ENCODE measurements at regions of chr6 and their contacts with region 1.

Region 1: GRCh38 chr6:2103644-2104523 is 141.5 kb downstream of the GMDS start:
- DNase-seq: peak in 3 of 14 experiments; percentile 44 to 50 (median 45)
- ATAC-seq: peak; percentile 58
- H3K4me3 ChIP-seq: no peak overlapping the region
- H3K4me3 Mint-ChIP-seq: no peak overlapping the region
- H3K27ac ChIP-seq: no peak overlapping the region
- H3K27ac Mint-ChIP-seq: no peak overlapping the region
- H3K4me1 ChIP-seq: no peaks in the 10 kb centered on the region
- H3K4me1 Mint-ChIP-seq: no peaks in the 10 kb centered on the region
- H3K27me3 ChIP-seq: no peaks in the 10 kb centered on the region
- H3K27me3 Mint-ChIP-seq: no peaks in the 10 kb centered on the region
- CTCF ChIP-seq: peak; percentile 63

Region 2: DNA sequence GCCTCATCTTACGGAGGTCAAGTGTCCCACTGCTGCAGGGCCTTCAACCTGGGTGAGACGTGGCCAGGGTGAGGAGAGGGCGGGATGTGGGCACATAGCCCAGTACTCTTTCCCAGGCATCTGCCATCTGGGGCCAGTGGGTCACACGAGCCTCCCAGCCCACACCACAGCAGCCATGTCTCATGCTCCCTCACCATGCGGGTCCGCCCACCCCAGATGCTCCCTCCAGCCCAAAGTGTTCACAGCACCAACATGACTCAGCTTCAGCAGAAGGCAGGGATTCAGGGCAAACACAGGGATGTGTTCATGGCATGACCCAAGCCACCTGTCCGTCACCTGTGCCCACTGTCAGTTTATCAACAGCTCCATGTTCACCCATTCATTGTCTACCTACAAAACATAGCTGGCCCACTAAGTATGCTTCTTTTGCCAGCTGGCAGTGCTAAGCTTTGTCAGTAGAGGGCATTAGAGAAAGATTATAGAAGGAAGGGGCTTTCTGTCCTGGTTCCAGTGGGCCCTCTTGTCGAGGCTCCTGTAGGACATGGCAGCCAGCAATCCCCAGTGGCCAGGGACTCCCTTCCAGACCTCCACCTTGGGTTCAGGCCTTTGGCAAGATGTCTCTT is 605.3 kb before region 1 on chr6:
- CTCF ChIA-PET with region 1: no interaction called
- POLR2A ChIA-PET with region 1: no interaction called
- intact Hi-C with region 1: no loop called
- DNase-seq: no peak
- ATAC-seq: no peak
- H3K4me3 ChIP-seq: no peak overlapping the region
- H3K4me3 Mint-ChIP-seq: no peak overlapping the region
- H3K27ac ChIP-seq: no peak overlapping the region
- H3K27ac Mint-ChIP-seq: no peak overlapping the region
- H3K4me1 ChIP-seq: no peaks in the 10 kb centered on the region
- H3K4me1 Mint-ChIP-seq: no peaks in the 10 kb centered on the region
- H3K27me3 ChIP-seq: no peaks in the 10 kb centered on the region
- H3K27me3 Mint-ChIP-seq: peaks cover 12% of the 10 kb centered on the region
- CTCF ChIP-seq: no peak

Region 3: GRCh38 chr6:2634139-2634964 is 530.5 kb after region 1 on chr6:
- CTCF ChIA-PET with region 1: interaction called, 3 read pairs
- POLR2A ChIA-PET with region 1: no interaction called
- intact Hi-C with region 1: loop called (anchors 1 to 5 kb)
- DNase-seq: peak; percentile 68 to 90 (median 80)
- ATAC-seq: peak; percentile 94
- H3K4me3 ChIP-seq: peak overlapping the region; percentile 44
- H3K4me3 Mint-ChIP-seq: peak overlapping the region; percentile 84
- H3K27ac ChIP-seq: no peak overlapping the region
- H3K27ac Mint-ChIP-seq: no peak overlapping the region
- H3K4me1 ChIP-seq: peaks cover 9% of the 10 kb centered on the region
- H3K4me1 Mint-ChIP-seq: no peaks in the 10 kb centered on the region
- H3K27me3 ChIP-seq: peaks cover 0 to 5% of the 10 kb centered on the region in 2 experiments
- H3K27me3 Mint-ChIP-seq: peaks cover 22% of the 10 kb centered on the region
- CTCF ChIP-seq: peak; percentile 97

Region 4: DNA sequence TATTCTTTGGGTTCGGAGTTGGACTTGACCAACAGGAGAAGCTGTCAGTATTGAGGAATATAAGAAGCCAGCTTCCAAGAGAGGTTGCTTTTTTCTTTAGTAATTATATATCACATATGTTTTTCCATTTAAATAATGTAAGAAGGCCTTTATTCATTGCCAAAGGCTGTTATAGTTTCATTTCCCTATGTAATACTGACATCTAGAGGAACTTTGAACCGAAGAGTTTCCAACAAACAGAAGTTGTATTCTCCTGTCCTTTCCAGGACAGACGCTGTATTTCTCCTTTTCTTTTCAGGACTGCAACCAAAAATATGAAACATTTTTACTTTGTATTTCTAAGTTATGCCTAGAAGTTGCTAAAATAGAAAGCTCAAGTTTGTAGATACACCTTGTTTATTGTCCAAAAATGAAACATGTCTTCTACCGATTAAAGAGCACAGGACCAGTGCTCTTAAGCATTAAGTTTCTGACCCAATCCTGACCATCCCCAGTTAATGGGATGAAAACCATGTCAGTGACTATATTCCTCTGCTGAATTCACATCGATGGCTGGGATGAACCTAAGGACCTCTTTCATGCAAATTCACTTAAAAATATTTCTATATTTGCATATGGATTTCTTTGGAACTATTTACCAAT is 591.7 kb after region 1 on chr6:
- CTCF ChIA-PET with region 1: no interaction called
- POLR2A ChIA-PET with region 1: no interaction called
- intact Hi-C with region 1: no loop called
- DNase-seq: no peak
- ATAC-seq: no peak
- H3K4me3 ChIP-seq: no peak overlapping the region
- H3K4me3 Mint-ChIP-seq: no peak overlapping the region
- H3K27ac ChIP-seq: no peak overlapping the region
- H3K27ac Mint-ChIP-seq: no peak overlapping the region
- H3K4me1 ChIP-seq: no peaks in the 10 kb centered on the region
- H3K4me1 Mint-ChIP-seq: no peaks in the 10 kb centered on the region
- H3K27me3 ChIP-seq: peaks cover 0 to 3% of the 10 kb centered on the region in 2 experiments
- H3K27me3 Mint-ChIP-seq: no peaks in the 10 kb centered on the region
- CTCF ChIP-seq: no peak

Measured in CD4-positive, alpha-beta T cell (primary cell).